ENCODE measurements at regions of chr15 and their contacts with region 1.

Region 1: GRCh38 chr15:92917606-92918407 is 17.7 kb downstream of the CHD2 start:
- DNase-seq: peak; percentile 86 to 97
- ATAC-seq: peak; percentile 55 to 85 (median 80)
- H3K4me3 ChIP-seq: peak overlapping the region in 6 of 10 donors; percentile 7 to 31 (median 22)
- H3K27ac ChIP-seq: peak overlapping the region; percentile 30 to 95 (median 80)
- H3K4me1 ChIP-seq: peaks cover 4 to 100% (median 94%) of the 10 kb centered on the region in 9 donors
- H3K27me3 ChIP-seq: no peaks in the 10 kb centered on the region
- CTCF ChIP-seq: peak; percentile 88 to 95 (median 90)

Region 2: DNA sequence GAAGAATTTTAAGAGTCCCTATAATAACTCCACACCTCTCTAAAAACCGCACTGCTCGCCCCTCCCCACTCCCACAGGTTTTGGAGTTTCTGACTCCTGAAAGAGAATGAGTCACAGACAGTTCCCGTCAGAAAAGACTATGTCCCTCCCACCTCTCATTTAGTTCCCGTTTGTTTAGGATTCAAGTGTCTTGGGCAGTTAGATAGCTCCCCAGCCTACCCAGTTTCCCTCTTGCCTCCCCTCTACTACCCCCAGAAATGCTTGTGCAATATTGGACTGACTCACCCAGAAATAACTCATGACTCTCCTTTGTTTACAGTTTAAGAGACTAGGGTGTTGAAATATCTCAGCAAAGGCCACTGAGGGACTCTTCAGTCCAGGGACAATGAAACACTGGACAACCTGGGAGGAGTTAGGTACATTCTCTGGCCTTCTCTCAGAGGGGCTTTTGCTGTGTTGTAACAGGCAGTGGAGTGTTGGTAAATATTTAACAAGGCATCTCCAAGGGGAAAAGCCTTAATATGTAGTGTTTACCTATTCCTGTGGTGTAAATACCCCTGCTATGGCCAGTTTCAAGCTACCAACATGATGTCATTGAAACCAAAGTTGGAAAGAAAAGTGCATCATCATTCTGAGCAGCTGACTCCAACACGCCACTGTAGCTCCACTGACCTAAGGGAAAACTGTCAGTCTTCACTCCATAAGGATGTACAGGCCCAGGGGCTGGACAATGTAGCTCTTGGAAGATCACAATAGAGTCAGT is 113.8 kb before region 1 on chr15:
- intact Hi-C with region 1: loop called (anchors 1 to 5 kb)
- DNase-seq: peak; percentile 40
- ATAC-seq: peak; percentile 42 to 91 (median 66)
- H3K4me3 ChIP-seq: no peak overlapping the region
- H3K27ac ChIP-seq: peak overlapping the region; percentile 3 to 96 (median 66)
- H3K4me1 ChIP-seq: peaks cover 3 to 67% (median 14%) of the 10 kb centered on the region in 9 donors
- H3K27me3 ChIP-seq: no peaks in the 10 kb centered on the region
- CTCF ChIP-seq: no peak

Region 3: GRCh38 chr15:93087825-93088199 is 170.0 kb after region 1 on chr15:
- intact Hi-C with region 1: no loop called
- DNase-seq: peak; percentile 69 to 71
- ATAC-seq: peak; percentile 62 to 79 (median 70)
- H3K4me3 ChIP-seq: peak overlapping the region; percentile 57 to 73 (median 64)
- H3K27ac ChIP-seq: peak overlapping the region; percentile 74 to 92 (median 84)
- H3K4me1 ChIP-seq: peaks cover 3 to 26% (median 17%) of the 10 kb centered on the region in 9 donors
- H3K27me3 ChIP-seq: peaks cover 0 to 83% (median 20%) of the 10 kb centered on the region in 7 donors
- CTCF ChIP-seq: peak; percentile 82 to 92 (median 87)